ENCODE measurements at regions of chr14 and their contacts with region 1.

Region 1: DNA sequence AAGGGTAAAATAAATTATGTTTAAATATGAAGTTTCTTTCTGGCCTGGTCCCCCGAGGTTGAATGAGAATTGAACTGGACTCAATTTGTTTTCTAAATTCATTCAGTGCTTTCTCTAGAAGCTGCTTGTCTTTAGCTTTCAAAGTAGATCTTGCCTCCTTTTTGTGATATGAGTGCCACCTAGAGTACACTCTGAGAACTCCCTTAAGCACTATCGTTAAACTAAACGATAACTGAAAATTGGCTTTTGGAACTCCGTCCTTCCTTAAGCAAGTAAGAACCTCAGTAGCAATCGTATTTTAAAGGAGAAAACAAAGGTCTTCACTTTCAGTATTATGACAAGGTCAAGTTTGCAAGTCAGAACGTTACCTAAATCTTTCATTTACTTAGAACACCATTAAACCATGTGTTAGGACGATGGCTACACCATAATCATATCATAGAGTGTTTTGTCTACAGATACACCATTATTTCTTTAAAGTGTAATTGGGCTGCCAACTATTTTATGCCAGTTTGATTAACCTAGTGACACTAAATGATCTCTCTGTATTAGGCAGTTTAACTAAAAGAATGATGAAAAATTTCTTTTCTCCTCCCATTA is 364.8 kb downstream of the SNAPC1 start:
- DNase-seq: peak in 2 of 9 experiments; percentile 59 to 70
- ATAC-seq: peak; percentile 69
- H3K4me3 ChIP-seq: no peak overlapping the region
- H3K4me3 Mint-ChIP-seq: no peak overlapping the region
- H3K27ac ChIP-seq: no peak overlapping the region
- H3K27ac Mint-ChIP-seq: no peak overlapping the region
- H3K4me1 ChIP-seq: no peaks in the 10 kb centered on the region
- H3K4me1 Mint-ChIP-seq: no peaks in the 10 kb centered on the region
- H3K27me3 ChIP-seq: peaks cover 0 to 2% of the 10 kb centered on the region in 2 experiments
- H3K27me3 Mint-ChIP-seq: peaks cover 29% of the 10 kb centered on the region
- CTCF ChIP-seq: peak; percentile 79

Region 2: DNA sequence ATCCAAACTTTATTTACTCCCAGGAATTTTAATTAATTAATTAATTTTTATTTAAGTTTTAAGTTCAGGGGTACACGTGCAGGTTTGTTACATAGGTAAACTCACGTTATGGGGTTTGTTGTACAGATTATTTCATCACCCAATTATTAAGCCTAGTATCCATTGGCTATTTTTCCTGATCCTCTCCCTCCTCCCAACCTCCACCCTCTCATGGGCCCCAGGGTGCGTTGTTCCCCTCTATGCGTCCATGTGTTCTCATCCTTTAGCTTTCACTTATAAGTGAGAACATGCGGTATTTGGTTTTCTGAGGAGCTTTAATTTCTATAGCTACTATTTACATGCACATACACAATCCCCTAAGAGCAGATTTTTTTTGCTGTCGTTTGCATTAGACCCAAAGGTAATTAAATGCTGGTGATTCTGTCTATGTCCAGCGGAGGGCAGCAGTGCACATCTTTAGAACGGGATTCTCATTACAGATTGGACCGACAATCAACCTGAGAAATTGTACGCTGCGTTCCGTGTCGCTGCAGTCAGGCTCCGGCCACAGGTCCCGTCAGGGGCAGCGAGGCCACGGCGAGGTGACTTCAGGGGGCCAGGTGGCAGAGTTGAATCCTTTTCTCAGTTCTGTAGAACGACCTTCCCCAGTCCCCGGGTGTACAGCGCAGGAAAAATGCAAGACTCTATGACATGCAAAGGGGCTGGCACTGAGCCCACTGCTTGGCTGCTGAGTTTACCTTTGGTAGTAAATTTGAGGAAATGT is 857.5 kb before region 1 on chr14:
- CTCF ChIA-PET with region 1: interaction called, 3 read pairs
- POLR2A ChIA-PET with region 1: no interaction called
- intact Hi-C with region 1: loop called (anchors 1 to 2 kb)
- DNase-seq: peak; percentile 63 to 87 (median 76)
- ATAC-seq: peak; percentile 96
- H3K4me3 ChIP-seq: peak overlapping the region; percentile 27 to 46
- H3K4me3 Mint-ChIP-seq: peak overlapping the region; percentile 75
- H3K27ac ChIP-seq: no peak overlapping the region
- H3K27ac Mint-ChIP-seq: no peak overlapping the region
- H3K4me1 ChIP-seq: no peaks in the 10 kb centered on the region
- H3K4me1 Mint-ChIP-seq: peaks cover 4% of the 10 kb centered on the region
- H3K27me3 ChIP-seq: peaks cover 0 to 4% of the 10 kb centered on the region in 2 experiments
- H3K27me3 Mint-ChIP-seq: peaks cover 38% of the 10 kb centered on the region
- CTCF ChIP-seq: peak; percentile 96

Region 3: DNA sequence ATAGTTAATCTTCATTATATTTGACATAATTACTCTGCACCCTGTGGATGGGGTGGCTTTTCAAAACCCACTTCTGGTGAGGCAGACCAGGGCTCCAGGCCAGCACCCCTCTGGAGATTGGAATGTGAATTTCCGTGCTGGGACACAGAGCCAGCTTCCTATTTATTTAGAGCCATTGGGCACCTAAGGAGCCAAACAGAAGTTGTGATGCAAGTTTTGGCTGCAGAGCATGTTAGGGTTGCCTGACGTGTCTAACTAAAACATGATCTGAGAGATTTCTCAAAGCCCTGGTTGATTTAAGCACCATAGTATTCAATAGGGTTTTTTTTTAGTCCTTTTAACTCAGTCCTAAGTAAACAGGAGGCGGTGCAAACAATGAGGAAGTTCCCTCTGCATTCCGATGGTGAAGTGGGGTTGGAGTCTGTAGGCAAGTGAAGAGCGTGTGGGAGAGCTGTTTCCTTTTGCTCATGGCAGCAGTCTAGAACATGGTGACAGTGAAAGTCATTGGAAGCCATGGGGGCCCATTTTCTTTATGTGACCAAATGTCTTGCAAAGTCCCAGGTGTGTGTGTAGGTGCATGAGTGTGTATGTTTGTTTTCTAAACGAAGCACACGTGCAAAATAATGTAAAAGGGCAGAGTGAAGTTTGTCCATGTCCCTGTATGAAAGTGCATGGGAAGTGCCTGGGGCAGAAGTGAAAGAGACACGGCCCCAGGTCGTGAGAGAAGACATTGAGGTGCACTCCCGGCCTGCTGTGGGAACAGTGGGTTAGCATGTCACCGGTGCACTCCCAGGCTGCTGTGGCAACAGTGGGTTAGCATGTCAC is 687.9 kb before region 1 on chr14:
- CTCF ChIA-PET with region 1: no interaction called
- POLR2A ChIA-PET with region 1: no interaction called
- intact Hi-C with region 1: no loop called
- DNase-seq: peak in 6 of 9 experiments; percentile 43 to 82 (median 59)
- ATAC-seq: peak; percentile 39
- H3K4me3 ChIP-seq: peak overlapping the region; percentile 19 to 34
- H3K4me3 Mint-ChIP-seq: peak overlapping the region; percentile 74
- H3K27ac ChIP-seq: peak overlapping the region; percentile 31 to 79
- H3K27ac Mint-ChIP-seq: peak overlapping the region; percentile 91
- H3K4me1 ChIP-seq: peaks cover 93% of the 10 kb centered on the region
- H3K4me1 Mint-ChIP-seq: peaks cover 91% of the 10 kb centered on the region
- H3K27me3 ChIP-seq: no peaks in the 10 kb centered on the region
- H3K27me3 Mint-ChIP-seq: no peaks in the 10 kb centered on the region
- CTCF ChIP-seq: no peak

Region 4: GRCh38 chr14:61894452-61895077 is 232.4 kb before region 1 on chr14:
- CTCF ChIA-PET with region 1: interaction called, 32 read pairs
- POLR2A ChIA-PET with region 1: no interaction called
- intact Hi-C with region 1: loop called (anchors 1 kb)
- DNase-seq: peak in 8 of 9 experiments; percentile 30 to 71 (median 58)
- ATAC-seq: no peak
- H3K4me3 ChIP-seq: no peak overlapping the region
- H3K4me3 Mint-ChIP-seq: no peak overlapping the region
- H3K27ac ChIP-seq: no peak overlapping the region
- H3K27ac Mint-ChIP-seq: no peak overlapping the region
- H3K4me1 ChIP-seq: peaks cover 8% of the 10 kb centered on the region
- H3K4me1 Mint-ChIP-seq: peaks cover 9% of the 10 kb centered on the region
- H3K27me3 ChIP-seq: peaks cover 0 to 3% of the 10 kb centered on the region in 2 experiments
- H3K27me3 Mint-ChIP-seq: peaks cover 2% of the 10 kb centered on the region
- CTCF ChIP-seq: peak; percentile 55

Region 5: GRCh38 chr14:61925043-61925442 is 201.9 kb before region 1 on chr14:
- CTCF ChIA-PET with region 1: interaction called, 17 read pairs
- POLR2A ChIA-PET with region 1: no interaction called
- intact Hi-C with region 1: loop called in 1 of 2 experiments (anchors 2 kb)
- DNase-seq: peak in 2 of 9 experiments; percentile 47 to 54
- ATAC-seq: no peak
- H3K4me3 ChIP-seq: no peak overlapping the region
- H3K4me3 Mint-ChIP-seq: no peak overlapping the region
- H3K27ac ChIP-seq: no peak overlapping the region
- H3K27ac Mint-ChIP-seq: no peak overlapping the region
- H3K4me1 ChIP-seq: no peaks in the 10 kb centered on the region
- H3K4me1 Mint-ChIP-seq: no peaks in the 10 kb centered on the region
- H3K27me3 ChIP-seq: no peaks in the 10 kb centered on the region
- H3K27me3 Mint-ChIP-seq: peaks cover 20% of the 10 kb centered on the region
- CTCF ChIP-seq: peak; percentile 33

Region 6: DNA sequence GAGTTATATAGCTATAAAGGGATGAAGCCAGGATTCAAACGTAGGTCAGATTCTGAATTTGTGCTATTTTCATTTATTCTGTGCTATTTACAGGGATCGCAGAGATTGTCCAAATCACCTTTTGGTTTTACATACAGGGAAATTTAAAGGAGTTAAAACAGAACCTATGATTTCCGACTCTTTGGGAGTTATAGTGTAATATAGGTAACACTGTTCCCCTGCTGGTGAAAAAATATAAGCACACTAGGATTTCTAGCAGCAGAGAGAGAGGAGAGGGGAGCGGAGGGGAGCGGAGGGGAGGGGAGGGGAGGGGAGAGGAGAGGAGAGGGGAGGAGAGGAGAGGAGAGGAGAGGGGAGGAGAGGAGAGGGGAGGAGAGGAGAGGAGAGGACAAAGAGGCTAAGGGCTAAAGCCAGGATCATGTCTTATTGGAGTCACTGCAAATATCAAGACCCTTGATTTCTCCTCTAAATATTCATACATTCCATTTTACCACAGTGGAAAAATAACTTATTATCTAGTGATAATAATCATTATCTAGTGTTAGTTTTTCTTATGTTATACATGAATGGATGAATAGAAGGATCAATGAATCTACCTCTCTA is 964.5 kb after region 1 on chr14:
- CTCF ChIA-PET with region 1: no interaction called
- POLR2A ChIA-PET with region 1: no interaction called
- intact Hi-C with region 1: no loop called
- DNase-seq: no peak
- ATAC-seq: no peak
- H3K4me3 ChIP-seq: no peak overlapping the region
- H3K4me3 Mint-ChIP-seq: no peak overlapping the region
- H3K27ac ChIP-seq: no peak overlapping the region
- H3K27ac Mint-ChIP-seq: no peak overlapping the region
- H3K4me1 ChIP-seq: no peaks in the 10 kb centered on the region
- H3K4me1 Mint-ChIP-seq: no peaks in the 10 kb centered on the region
- H3K27me3 ChIP-seq: no peaks in the 10 kb centered on the region
- H3K27me3 Mint-ChIP-seq: no peaks in the 10 kb centered on the region
- CTCF ChIP-seq: no peak